Activated CD4-positive, alpha-beta memory T cell treated with anti-CD3 and anti-CD28 coated beads for 36 hours (primary cell): ENCODE measurements at regions of chr13 and their contacts with region 1.

Region 1: GRCh38 chr13:110593430-110594130 is 21.8 kb upstream of the NAXD start:
- DNase-seq: no peak
- H3K4me3 Mint-ChIP-seq: no peak overlapping the region
- H3K27ac Mint-ChIP-seq: no peak overlapping the region
- H3K4me1 Mint-ChIP-seq: peaks cover 1% of the 10 kb centered on the region
- H3K27me3 Mint-ChIP-seq: peaks cover 3% of the 10 kb centered on the region

Region 2: GRCh38 chr13:111049802-111050538 is 456.4 kb after region 1 on chr13:
- CTCF ChIA-PET with region 1: no interaction called
- POLR2A ChIA-PET with region 1: no interaction called
- intact Hi-C with region 1: loop called (anchors 10 kb)
- DNase-seq: no peak
- H3K4me3 Mint-ChIP-seq: no peak overlapping the region
- H3K27ac Mint-ChIP-seq: no peak overlapping the region
- H3K4me1 Mint-ChIP-seq: peaks cover 7% of the 10 kb centered on the region
- H3K27me3 Mint-ChIP-seq: no peaks in the 10 kb centered on the region